PC-9 (cell line): ENCODE measurements at regions of chr10 and their contacts with region 1.

Region 1: GRCh38 chr10:70221030-70221429 is 12.2 kb downstream of the PPA1 start:
- DNase-seq: no peak
- H3K4me3 ChIP-seq: no peak overlapping the region; the same call in 1 of the 2 replicates
- H3K27ac ChIP-seq: peak overlapping the region; percentile 78
- H3K4me1 ChIP-seq: peaks cover 35% of the 10 kb centered on the region
- H3K27me3 ChIP-seq: no peaks in the 10 kb centered on the region
- CTCF ChIP-seq: no peak

Region 2: GRCh38 chr10:69929575-69929974 is 291.5 kb before region 1 on chr10:
- CTCF ChIA-PET with region 1: no interaction called
- POLR2A ChIA-PET with region 1: no interaction called
- intact Hi-C with region 1: no loop called
- DNase-seq: no peak
- H3K4me3 ChIP-seq: no peak overlapping the region
- H3K27ac ChIP-seq: no peak overlapping the region
- H3K4me1 ChIP-seq: no peaks in the 10 kb centered on the region
- H3K27me3 ChIP-seq: no peaks in the 10 kb centered on the region
- CTCF ChIP-seq: no peak

Region 3: GRCh38 chr10:70074165-70074564 is 146.9 kb before region 1 on chr10:
- CTCF ChIA-PET with region 1: no interaction called
- POLR2A ChIA-PET with region 1: no interaction called
- intact Hi-C with region 1: no loop called
- DNase-seq: no peak
- H3K4me3 ChIP-seq: no peak overlapping the region
- H3K27ac ChIP-seq: no peak overlapping the region
- H3K4me1 ChIP-seq: no peaks in the 10 kb centered on the region
- H3K27me3 ChIP-seq: peaks cover 43% of the 10 kb centered on the region
- CTCF ChIP-seq: no peak

Region 4: DNA sequence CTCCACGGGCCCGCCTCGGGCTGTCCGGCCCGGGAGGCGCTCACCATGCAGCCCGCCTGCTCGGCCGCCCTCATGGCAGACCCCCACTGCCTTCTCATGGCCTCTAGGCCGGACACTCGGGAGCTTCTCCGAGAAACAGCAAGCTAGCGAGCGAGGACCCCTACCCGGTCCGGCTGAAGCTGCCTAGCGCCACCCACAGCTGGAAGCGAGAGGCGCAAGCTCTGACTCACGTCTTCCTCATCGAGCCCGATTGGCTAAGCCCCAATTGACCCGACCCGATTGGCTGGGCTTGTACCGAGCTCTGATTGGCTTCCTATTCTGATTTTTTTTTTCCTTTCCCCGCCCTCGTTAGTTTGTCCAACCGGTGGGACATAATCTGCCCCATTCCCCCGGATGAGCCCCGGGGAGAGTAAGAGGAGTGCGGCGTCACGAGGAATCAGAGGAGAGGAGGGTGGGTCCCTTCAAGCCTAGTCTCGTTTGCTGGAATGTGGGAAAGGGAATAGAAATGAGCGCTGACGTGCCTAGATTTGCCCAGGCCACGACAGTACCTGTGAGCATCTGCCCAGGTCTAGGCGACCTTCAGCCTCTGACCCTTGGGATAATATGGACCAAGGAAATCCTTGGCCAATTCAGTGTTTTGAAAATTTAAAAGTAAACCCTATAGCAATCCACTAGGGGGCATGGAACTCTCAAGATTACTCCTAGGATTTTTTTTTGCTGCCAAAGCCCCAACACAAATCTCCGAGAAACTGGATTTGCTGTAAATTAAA is 74.4 kb before region 1 on chr10 and contains the start of gene TYSND1:
- CTCF ChIA-PET with region 1: interaction called, 10 read pairs
- POLR2A ChIA-PET with region 1: interaction called, 11 read pairs
- intact Hi-C with region 1: no loop called
- DNase-seq: peak; percentile 98 to 99
- H3K4me3 ChIP-seq: peak within 1 kb of the TSS; percentile 84
- H3K27ac ChIP-seq: peak within 1 kb of the TSS; percentile 70
- H3K4me1 ChIP-seq: peaks cover 15% of the 10 kb centered on the region
- H3K27me3 ChIP-seq: no peaks in the 10 kb centered on the region
- CTCF ChIP-seq: peak; percentile 81
- total RNA-seq, gene TYSND1: 28.0 and 33.5 TPM in 2 replicates

Region 5: GRCh38 chr10:70233109-70233938 is 12.3 kb after region 1 on chr10 and contains the start of gene PPA1:
- CTCF ChIA-PET with region 1: interaction called, 13 read pairs
- POLR2A ChIA-PET with region 1: interaction called, 4 read pairs
- intact Hi-C with region 1: no loop called
- DNase-seq: peak; percentile 91 to 100
- H3K4me3 ChIP-seq: peak within 1 kb of the TSS; percentile 79
- H3K27ac ChIP-seq: peak within 1 kb of the TSS; percentile 77
- H3K4me1 ChIP-seq: peaks cover 52% of the 10 kb centered on the region
- H3K27me3 ChIP-seq: no peaks in the 10 kb centered on the region
- CTCF ChIP-seq: peak; percentile 52
- total RNA-seq, gene PPA1: 224 and 236 TPM in 2 replicates

Region 6: GRCh38 chr10:70348228-70348850 is 127.3 kb after region 1 on chr10:
- CTCF ChIA-PET with region 1: no interaction called
- POLR2A ChIA-PET with region 1: no interaction called
- intact Hi-C with region 1: loop called (anchors 1 kb)
- DNase-seq: peak in 1 of 2 experiments; percentile 42
- H3K4me3 ChIP-seq: no peak overlapping the region
- H3K27ac ChIP-seq: no peak overlapping the region
- H3K4me1 ChIP-seq: peaks cover 15% of the 10 kb centered on the region
- H3K27me3 ChIP-seq: no peaks in the 10 kb centered on the region
- CTCF ChIP-seq: peak; percentile 67

Region 7: GRCh38 chr10:70381471-70382421 is 160.7 kb after region 1 on chr10:
- CTCF ChIA-PET with region 1: interaction called, 44 read pairs
- POLR2A ChIA-PET with region 1: no interaction called
- intact Hi-C with region 1: no loop called
- DNase-seq: peak in 1 of 2 experiments; percentile 52
- H3K4me3 ChIP-seq: peak overlapping the region; percentile 89
- H3K27ac ChIP-seq: no peak overlapping the region
- H3K4me1 ChIP-seq: peaks cover 29% of the 10 kb centered on the region
- H3K27me3 ChIP-seq: no peaks in the 10 kb centered on the region
- CTCF ChIP-seq: no peak

Region 8: DNA sequence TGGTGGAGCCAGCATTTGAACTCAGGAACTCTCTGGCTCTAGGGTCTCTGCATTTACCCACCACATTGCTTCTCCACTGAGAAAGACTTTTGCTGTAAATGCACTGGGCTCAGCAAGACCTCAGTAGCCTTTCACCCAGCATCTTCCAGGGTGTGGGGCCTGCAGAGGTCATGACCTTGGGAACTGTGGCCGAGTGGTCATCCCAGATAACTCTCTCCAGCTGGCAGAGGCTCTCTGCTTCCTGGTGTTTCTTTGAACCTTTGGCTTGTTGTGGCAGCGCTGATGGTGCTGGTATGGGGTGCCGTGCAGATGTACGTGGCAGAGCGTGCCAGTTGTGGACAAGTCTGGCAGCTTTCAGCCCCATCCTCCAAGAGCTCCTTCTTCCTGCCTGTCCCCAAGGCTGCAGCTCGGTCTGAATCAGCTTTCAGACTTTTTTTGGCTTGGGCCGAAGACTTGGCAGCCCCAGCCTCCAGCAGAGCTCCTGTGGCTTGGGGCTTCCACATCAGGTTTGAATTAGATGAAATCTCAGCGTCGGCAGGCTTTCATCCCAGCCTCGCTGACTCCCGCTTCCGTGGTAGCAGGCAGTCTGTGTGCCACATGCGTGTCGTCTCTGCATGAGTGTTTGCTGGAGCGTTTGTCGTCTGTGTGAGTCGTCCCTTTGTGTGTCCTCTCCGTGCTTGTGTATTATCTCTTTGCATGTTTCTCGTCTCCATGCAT is 472.7 kb after region 1 on chr10:
- CTCF ChIA-PET with region 1: no interaction called
- POLR2A ChIA-PET with region 1: no interaction called
- intact Hi-C with region 1: no loop called
- DNase-seq: no peak
- H3K4me3 ChIP-seq: no peak overlapping the region
- H3K27ac ChIP-seq: no peak overlapping the region
- H3K4me1 ChIP-seq: no peaks in the 10 kb centered on the region
- H3K27me3 ChIP-seq: no peaks in the 10 kb centered on the region
- CTCF ChIP-seq: no peak

Region 9: DNA sequence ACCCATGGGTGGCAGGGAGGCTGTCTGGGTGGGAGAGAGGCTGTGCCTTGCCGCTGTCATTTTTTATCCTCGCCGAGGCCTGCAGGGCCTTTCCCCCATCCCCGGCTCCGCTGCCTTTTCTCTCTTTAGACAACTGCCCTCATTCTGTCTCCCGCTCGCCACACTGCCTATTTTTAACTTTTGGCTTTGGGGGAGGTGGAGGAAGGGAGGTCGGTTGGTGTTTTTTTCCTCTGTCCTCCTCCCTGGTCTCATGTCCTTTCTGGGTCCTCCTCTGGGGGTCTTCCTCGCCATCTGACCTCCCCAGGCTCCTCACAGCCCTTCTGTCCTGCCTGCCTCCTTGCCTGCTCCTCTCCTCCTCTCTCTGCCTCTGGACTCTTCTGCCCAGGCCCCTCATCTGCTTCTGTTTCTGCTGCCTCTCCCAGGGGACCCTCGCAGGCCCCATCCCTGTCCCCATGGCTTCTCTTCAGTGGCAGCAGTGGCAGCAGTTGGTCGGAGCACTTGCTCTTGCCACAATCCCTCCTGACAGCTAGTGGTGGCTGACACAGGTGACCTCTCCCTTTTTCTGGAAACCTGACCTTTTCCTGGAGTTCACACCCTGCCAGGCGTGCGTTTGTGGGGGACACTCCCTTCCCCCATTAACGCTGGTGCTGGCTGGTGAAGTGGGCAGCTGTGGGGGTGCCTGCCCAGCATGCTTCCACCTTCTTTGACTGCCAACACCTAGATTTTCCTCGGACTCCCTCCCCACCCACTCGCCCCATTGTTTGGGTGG is 686.8 kb after region 1 on chr10:
- CTCF ChIA-PET with region 1: no interaction called
- POLR2A ChIA-PET with region 1: no interaction called
- intact Hi-C with region 1: no loop called
- DNase-seq: no peak
- H3K4me3 ChIP-seq: no peak overlapping the region
- H3K27ac ChIP-seq: no peak overlapping the region
- H3K4me1 ChIP-seq: no peaks in the 10 kb centered on the region
- H3K27me3 ChIP-seq: peaks cover 40% of the 10 kb centered on the region
- CTCF ChIP-seq: no peak